ENCODE measurements at regions of chrX and their contacts with region 1.

Region 1: GRCh38 chrX:48923771-48924170 is 4.9 kb upstream of the PIM2 start:
- DNase-seq: no peak
- ATAC-seq: no peak
- H3K4me3 ChIP-seq: no peak overlapping the region
- H3K4me3 Mint-ChIP-seq: no peak overlapping the region
- H3K27ac ChIP-seq: peak overlapping the region in 1 of 2 experiments; percentile 31
- H3K27ac Mint-ChIP-seq: peak overlapping the region; percentile 88
- H3K4me1 ChIP-seq: peaks cover 51% of the 10 kb centered on the region
- H3K4me1 Mint-ChIP-seq: peaks cover 47% of the 10 kb centered on the region
- H3K27me3 ChIP-seq: no peaks in the 10 kb centered on the region
- H3K27me3 Mint-ChIP-seq: no peaks in the 10 kb centered on the region
- CTCF ChIP-seq: no peak

Region 2: GRCh38 chrX:48083212-48083611 is 840.6 kb before region 1 on chrX:
- CTCF ChIA-PET with region 1: no interaction called
- POLR2A ChIA-PET with region 1: no interaction called
- intact Hi-C with region 1: no loop called
- DNase-seq: peak; percentile 5 to 63 (median 39)
- ATAC-seq: peak; percentile 74
- H3K4me3 ChIP-seq: no peak overlapping the region
- H3K4me3 Mint-ChIP-seq: no peak overlapping the region
- H3K27ac ChIP-seq: no peak overlapping the region
- H3K27ac Mint-ChIP-seq: no peak overlapping the region
- H3K4me1 ChIP-seq: no peaks in the 10 kb centered on the region
- H3K4me1 Mint-ChIP-seq: no peaks in the 10 kb centered on the region
- H3K27me3 ChIP-seq: no peaks in the 10 kb centered on the region
- H3K27me3 Mint-ChIP-seq: no peaks in the 10 kb centered on the region
- CTCF ChIP-seq: peak; percentile 56

Region 3: DNA sequence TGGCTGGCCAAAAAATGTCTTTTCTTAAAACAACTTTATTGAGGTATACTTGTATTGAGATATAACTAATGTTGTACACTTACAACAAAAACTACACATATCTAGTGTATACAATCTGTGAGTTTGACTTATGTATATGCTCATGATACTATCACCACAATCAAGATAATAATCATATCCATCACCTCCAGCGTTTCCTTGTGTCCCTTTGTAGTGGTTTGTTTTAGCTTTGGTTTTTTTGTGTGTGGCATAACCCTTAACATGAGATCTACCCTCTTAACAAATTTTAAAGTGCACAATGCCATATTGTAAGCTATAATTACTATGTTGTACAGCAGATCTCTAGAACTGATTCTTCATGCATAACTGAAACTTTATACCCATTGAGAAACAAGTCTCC is 74.9 kb before region 1 on chrX:
- CTCF ChIA-PET with region 1: no interaction called
- POLR2A ChIA-PET with region 1: no interaction called
- intact Hi-C with region 1: no loop called
- DNase-seq: peak in 1 of 9 experiments; percentile 14
- ATAC-seq: no peak
- H3K4me3 ChIP-seq: no peak overlapping the region
- H3K4me3 Mint-ChIP-seq: no peak overlapping the region
- H3K27ac ChIP-seq: no peak overlapping the region
- H3K27ac Mint-ChIP-seq: no peak overlapping the region
- H3K4me1 ChIP-seq: no peaks in the 10 kb centered on the region
- H3K4me1 Mint-ChIP-seq: peaks cover 6% of the 10 kb centered on the region
- H3K27me3 ChIP-seq: no peaks in the 10 kb centered on the region
- H3K27me3 Mint-ChIP-seq: peaks cover 7% of the 10 kb centered on the region
- CTCF ChIP-seq: no peak

Region 4: GRCh38 chrX:48937054-48937907 is 13.5 kb after region 1 on chrX:
- CTCF ChIA-PET with region 1: interaction called, 8 read pairs
- POLR2A ChIA-PET with region 1: interaction called, 64 read pairs
- intact Hi-C with region 1: loop called in 1 of 2 experiments (anchors 1 kb)
- DNase-seq: peak; percentile 79 to 95 (median 89)
- ATAC-seq: peak; percentile 67
- H3K4me3 ChIP-seq: peak overlapping the region; percentile 33 to 45
- H3K4me3 Mint-ChIP-seq: peak overlapping the region; percentile 83
- H3K27ac ChIP-seq: peak overlapping the region; percentile 82 to 89
- H3K27ac Mint-ChIP-seq: peak overlapping the region; percentile 99
- H3K4me1 ChIP-seq: peaks cover 81% of the 10 kb centered on the region
- H3K4me1 Mint-ChIP-seq: peaks cover 76% of the 10 kb centered on the region
- H3K27me3 ChIP-seq: no peaks in the 10 kb centered on the region
- H3K27me3 Mint-ChIP-seq: no peaks in the 10 kb centered on the region
- CTCF ChIP-seq: no peak

Measured in CD8-positive, alpha-beta T cell (primary cell).